ENCODE measurements at regions of chr17 and their contacts with region 1.

Region 1: GRCh38 chr17:65055348-65056261 is 935 bp downstream of the GNA13 start:
- DNase-seq: no peak
- ATAC-seq: peak; percentile 65
- H3K4me3 ChIP-seq: peak overlapping the region; percentile 98
- H3K27ac ChIP-seq: peak overlapping the region; percentile 95
- H3K4me1 ChIP-seq: peaks cover 5% of the 10 kb centered on the region; the same call in 1 of the 2 replicates
- H3K27me3 ChIP-seq: no peaks in the 10 kb centered on the region
- CTCF ChIP-seq: no peak
- EP300 ChIP-seq: no peak
- POLR2A ChIP-seq: no peak; the same call in 1 of the 2 replicates
- RAD21 ChIP-seq: no peak

Region 2: DNA sequence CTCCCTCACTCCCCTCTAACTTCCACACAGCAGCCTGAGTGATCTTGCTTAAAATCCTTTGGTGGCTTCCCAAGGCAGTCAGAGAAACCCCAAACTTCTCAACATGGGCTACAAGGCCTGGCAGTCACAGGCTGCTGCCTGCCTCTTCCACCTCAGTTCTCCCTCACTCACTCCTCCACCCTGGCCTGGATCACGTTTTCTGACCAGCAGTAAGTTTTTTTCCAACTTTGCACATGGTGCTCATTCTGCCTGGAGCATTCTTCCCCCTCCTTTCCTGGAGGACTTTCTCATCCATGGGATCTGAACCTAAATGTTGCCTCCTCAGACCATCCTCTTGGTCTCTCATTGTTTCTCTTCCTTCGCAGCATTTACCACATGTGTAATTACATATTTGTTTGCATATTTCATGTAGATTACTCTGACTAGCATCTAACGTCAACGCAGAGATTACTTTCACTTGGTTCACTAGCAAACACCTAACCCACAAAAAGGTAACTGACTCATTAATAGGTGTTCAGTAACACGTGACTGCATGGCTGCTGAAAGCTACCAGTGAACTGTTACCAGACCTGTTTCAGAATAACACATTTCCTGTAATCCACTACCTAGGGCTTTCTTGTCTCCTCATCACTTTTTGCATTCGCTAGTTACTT is 16.1 kb before region 1 on chr17:
- CTCF ChIA-PET with region 1: interaction called, 5 read pairs
- POLR2A ChIA-PET with region 1: interaction called, 5 read pairs
- RAD21 ChIA-PET with region 1: interaction called, 10 read pairs
- SMC1A ChIA-PET with region 1: interaction called, 103 read pairs
- in situ Hi-C with region 1: no loop called
- intact Hi-C with region 1: no loop called
- DNase-seq: peak; percentile 68
- ATAC-seq: peak; percentile 85
- H3K4me3 ChIP-seq: peak overlapping the region; percentile 10
- H3K27ac ChIP-seq: peak overlapping the region; percentile 87
- H3K4me1 ChIP-seq: peaks cover 56% of the 10 kb centered on the region
- H3K27me3 ChIP-seq: no peaks in the 10 kb centered on the region
- CTCF ChIP-seq: no peak
- EP300 ChIP-seq: peak; percentile 18 to 27; a peak in 2 of 4 replicates
- POLR2A ChIP-seq: no peak
- RAD21 ChIP-seq: no peak

Region 3: DNA sequence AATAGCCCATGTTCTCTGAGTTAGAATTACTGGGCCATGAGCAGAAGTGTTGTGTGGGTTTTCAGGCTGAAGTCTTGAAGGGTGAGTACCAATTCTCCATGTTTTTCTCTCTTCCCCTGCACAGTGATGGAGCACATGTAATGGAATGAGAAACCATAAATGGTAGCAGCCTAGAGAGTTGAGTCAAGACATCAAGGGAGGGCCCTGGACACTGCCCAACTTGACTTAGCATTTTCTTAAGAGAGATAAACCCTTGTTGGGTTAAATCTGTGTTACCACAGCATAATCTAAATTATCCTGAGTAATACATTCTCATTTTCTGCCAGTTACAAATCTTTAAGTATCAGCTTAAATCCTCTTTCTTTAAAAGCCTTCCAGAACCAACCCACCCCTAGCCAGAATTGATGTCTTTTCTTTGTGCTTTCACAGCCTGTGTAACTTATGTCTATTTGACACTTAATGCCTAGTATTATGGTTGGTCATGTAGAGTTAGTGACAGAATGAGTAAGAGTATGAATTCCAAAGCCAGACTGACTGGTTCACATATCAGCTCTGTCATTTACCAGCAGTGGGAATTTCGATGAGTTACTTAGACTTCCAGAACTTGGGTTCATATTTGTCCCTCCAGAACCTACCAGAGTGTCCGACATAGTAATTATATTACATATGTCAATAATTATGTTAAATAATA is 54.5 kb after region 1 on chr17:
- CTCF ChIA-PET with region 1: no interaction called
- POLR2A ChIA-PET with region 1: no interaction called
- RAD21 ChIA-PET with region 1: no interaction called
- SMC1A ChIA-PET with region 1: no interaction called
- in situ Hi-C with region 1: no loop called
- intact Hi-C with region 1: no loop called
- DNase-seq: no peak
- ATAC-seq: no peak
- H3K4me3 ChIP-seq: no peak overlapping the region
- H3K27ac ChIP-seq: no peak overlapping the region
- H3K4me1 ChIP-seq: no peaks in the 10 kb centered on the region
- H3K27me3 ChIP-seq: no peaks in the 10 kb centered on the region
- CTCF ChIP-seq: no peak
- EP300 ChIP-seq: no peak
- POLR2A ChIP-seq: no peak
- RAD21 ChIP-seq: no peak